Dendritic cell treated with granulocyte-macrophage colony-stimulating factor and Interleukin-4, amounts not matched to agents 40 ng/mL and 50 ng/mL, for 4 days (primary cell): ENCODE measurements at regions of chr17 and their contacts with region 1.

Region 1: GRCh38 chr17:83155138-83156121 is 76.0 kb downstream of the METRNL start:
- H3K4me3 Mint-ChIP-seq: peak overlapping the region; percentile 24
- H3K27ac Mint-ChIP-seq: peak overlapping the region; percentile 95
- H3K4me1 Mint-ChIP-seq: peaks cover 73% of the 10 kb centered on the region
- H3K27me3 Mint-ChIP-seq: peaks cover 8% of the 10 kb centered on the region

Region 2: GRCh38 chr17:83099570-83100231 is 55.7 kb before region 1 on chr17:
- intact Hi-C with region 1: loop called (anchors 2 kb)
- H3K4me3 Mint-ChIP-seq: peak overlapping the region; percentile 69
- H3K27ac Mint-ChIP-seq: peak overlapping the region; percentile 93
- H3K4me1 Mint-ChIP-seq: peaks cover 75% of the 10 kb centered on the region
- H3K27me3 Mint-ChIP-seq: peaks cover 8% of the 10 kb centered on the region

Region 3: DNA sequence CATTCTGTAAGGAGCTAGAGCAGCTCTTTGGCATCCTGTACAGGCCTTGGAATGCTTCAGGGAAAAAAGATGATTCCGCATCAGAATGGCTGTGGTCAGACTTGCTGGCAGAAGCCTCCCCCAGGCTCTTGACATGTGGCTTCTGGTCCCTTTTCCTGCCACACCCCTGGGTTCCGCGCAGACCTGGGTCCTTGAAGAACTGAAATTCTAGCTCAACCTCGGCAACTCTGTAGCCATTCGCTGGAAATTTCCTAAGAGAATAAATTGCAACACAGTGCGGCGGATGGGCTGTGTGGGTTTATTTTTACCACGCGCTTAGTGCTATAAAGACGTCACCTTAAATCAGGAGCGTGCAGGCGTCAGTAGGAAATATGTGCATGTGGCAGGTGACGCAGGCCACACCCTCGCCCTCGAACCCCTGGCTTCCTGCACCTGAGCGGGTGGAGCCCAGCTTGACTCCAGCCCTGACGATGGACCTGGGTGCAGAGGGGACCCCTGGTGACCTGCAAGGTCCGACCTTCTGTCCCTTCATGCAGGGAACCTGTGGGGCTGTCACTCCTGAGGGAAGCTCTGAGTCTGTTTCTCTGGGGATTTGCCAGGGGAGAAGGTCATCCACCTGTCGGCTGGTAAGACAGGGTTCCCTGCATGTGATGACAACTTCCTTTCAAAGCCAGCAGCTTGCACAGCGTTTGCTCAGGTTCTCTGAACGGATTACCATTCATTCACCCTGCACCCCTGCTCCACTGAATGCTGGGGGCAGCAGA is 29.7 kb before region 1 on chr17:
- intact Hi-C with region 1: loop called (anchors 1 kb)
- H3K4me3 Mint-ChIP-seq: peak overlapping the region; percentile 61
- H3K27ac Mint-ChIP-seq: peak overlapping the region; percentile 90
- H3K4me1 Mint-ChIP-seq: peaks cover 85% of the 10 kb centered on the region
- H3K27me3 Mint-ChIP-seq: peaks cover 24% of the 10 kb centered on the region

Region 4: DNA sequence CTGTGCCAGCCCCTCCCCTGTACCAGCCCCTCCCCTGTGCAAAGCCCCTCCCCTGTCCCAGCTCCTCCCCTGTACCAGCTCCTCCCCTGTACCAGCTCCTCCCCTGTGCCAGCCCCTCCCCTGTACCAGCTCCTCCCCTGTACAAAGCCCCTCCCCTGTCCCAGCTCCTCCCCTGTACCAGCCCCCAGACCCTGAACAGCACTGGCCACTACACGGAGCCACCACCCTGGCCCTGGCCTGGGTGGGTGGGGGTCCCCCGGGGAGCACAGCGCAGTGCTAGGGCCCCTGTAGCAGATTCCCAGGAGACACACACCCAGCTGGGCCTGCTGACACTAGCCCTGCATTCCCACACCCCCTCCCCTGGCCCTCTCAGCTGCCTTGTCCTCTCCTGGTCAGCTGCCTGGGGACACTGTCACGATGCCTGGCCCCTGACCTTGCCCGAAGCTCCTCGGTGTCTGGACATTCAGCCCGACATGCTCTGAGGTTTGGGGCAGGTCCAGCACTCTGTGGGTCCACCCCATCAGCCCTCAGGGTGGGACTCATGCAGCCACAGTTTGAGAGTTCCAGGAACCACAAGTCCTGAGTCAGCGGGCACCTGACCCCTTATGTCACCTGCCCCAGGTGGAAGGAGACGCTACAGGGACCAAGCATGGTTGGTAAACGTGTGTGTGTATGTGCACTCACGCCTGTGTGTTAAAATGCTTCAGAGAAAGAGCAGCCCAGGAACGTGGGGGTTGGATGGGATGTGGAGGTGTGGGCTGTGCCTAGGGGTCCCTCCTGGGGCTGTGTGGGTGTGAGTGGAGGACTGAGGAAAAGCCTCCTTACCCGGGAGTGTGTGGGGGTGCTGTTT is 38.1 kb after region 1 on chr17:
- intact Hi-C with region 1: loop called (anchors 2 kb)
- H3K4me3 Mint-ChIP-seq: peak overlapping the region; percentile 67
- H3K27ac Mint-ChIP-seq: peak overlapping the region; percentile 93
- H3K4me1 Mint-ChIP-seq: peaks cover 90% of the 10 kb centered on the region
- H3K27me3 Mint-ChIP-seq: peaks cover 5% of the 10 kb centered on the region